ENCODE measurements at regions of chr4 and their contacts with region 1.

Region 1: DNA sequence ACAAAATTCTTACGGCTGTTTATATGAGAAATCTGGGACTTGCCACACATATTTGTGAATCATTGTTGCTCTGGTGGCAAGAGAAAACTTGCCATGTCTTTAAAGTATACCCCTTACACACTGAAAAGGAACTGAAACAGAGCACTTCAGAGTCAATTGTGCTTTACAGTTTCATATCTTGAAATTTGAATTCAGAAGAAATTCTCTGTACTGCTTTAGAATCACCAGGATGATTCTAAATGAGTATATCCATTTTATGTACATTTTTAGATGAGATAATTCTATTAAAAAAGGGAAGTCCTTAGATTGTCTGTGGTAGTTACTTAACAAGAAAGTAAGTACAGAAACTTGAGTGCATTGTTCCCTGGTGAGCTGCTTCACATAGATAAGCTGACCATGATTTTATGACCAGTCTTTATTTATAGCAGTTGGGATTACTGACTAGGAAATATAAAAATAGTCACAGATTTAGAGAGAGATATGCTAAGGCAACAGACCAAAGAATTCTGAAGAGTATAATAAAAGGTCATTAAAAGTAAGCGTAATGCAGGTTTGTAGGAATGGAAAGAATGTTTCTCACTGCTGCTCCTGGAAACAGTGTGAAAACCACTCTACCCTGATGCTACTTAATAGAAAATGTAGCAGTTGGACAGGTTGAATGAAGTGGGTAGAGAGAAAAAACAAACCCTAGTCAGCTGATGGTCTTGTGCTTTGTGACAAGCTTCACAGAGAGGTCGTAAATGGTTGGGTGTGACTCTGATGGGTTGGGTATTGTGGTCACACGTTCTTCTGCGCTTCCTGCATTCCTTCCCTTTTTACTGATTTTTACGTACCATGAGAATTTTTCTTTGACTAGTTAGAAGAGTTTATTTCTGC is 41.0 kb downstream of the FNIP2 start:
- DNase-seq: peak; percentile 43
- H3K4me3 ChIP-seq: peak overlapping the region in 1 of 4 donors; percentile 3
- H3K27ac ChIP-seq: peak overlapping the region; percentile 85 to 90 (median 88)
- H3K4me1 ChIP-seq: peaks cover 26 to 97% (median 65%) of the 10 kb centered on the region in 4 donors
- H3K27me3 ChIP-seq: no peaks in the 10 kb centered on the region
- CTCF ChIP-seq: no peak
- EP300 ChIP-seq: peak; percentile 44
- POLR2A ChIP-seq: no peak

Region 2: DNA sequence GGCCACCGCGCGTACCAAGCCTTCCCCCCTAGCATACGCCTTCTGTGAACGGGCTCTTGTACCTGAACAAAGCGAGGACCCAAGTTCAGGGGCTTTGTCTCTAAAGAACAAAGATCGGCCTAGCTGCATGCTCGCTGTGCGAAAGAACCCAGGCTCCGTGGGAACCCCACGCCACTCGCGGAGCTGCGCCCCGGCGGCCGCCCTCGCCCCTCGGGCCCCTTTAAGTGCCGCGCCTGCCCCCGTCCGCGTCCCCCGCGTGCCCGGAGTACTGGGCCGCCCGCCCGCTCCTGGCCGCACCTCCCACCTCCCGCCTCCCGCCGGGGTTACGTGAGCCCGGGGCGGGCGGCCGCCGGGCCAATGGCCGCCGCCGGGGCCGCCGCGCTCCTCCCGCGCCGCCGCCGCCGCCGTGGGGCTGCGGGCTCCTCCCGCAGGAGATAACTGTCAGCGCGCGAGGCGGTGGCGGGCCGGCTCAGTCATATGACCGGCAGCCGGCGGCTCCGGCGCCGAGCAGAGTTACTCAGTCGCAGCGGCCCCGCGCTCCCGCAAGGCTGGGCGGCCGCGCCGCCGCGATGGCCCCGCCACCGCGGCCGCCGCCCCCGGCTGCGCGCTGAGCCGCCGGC is 41.2 kb before region 1 on chr4 and contains the start of gene FNIP2:
- in situ Hi-C with region 1: no loop called
- intact Hi-C with region 1: loop called (anchors 5 kb)
- DNase-seq: peak; percentile 86
- H3K4me3 ChIP-seq: peak within 1 kb of the TSS; percentile 81 to 92 (median 87)
- H3K27ac ChIP-seq: peak within 1 kb of the TSS; percentile 92 to 93 (median 92)
- H3K4me1 ChIP-seq: peaks cover 9 to 44% (median 32%) of the 10 kb centered on the region in 4 donors
- H3K27me3 ChIP-seq: no peaks in the 10 kb centered on the region
- CTCF ChIP-seq: no peak
- EP300 ChIP-seq: no peak
- POLR2A ChIP-seq: peak; percentile 55
- total RNA-seq, gene FNIP2: 47.2 to 105 (median 64.0) TPM

Region 3: DNA sequence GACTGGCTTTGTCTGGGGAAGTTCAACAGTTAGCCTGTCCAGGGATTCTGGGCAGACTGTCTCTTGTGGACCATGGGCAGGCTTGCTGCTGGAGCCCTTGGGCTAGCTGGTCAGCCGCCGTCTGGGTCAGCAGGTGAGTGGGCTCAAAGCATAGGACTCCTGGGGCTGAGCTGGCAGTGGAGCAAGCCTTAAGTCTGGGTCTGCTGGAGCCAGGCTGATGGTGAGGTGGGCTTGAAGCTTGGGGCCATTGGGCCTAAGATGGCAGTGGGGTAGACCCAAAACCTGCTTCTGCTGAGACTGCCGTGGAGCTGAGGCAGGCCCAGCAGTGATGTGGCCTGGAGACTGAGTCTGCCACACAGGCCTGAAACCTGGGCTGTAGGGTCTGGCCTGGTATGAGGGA is 938.1 kb after region 1 on chr4:
- in situ Hi-C with region 1: no loop called
- intact Hi-C with region 1: no loop called
- DNase-seq: no peak
- H3K4me3 ChIP-seq: no peak overlapping the region
- H3K27ac ChIP-seq: no peak overlapping the region
- H3K4me1 ChIP-seq: no peaks in the 10 kb centered on the region
- H3K27me3 ChIP-seq: no peaks in the 10 kb centered on the region
- CTCF ChIP-seq: no peak
- EP300 ChIP-seq: no peak
- POLR2A ChIP-seq: no peak

Measured in transverse colon (tissue), 4 donors.